K562 (cell line): ENCODE measurements at regions of chrX and their contacts with region 1.

Region 1: DNA sequence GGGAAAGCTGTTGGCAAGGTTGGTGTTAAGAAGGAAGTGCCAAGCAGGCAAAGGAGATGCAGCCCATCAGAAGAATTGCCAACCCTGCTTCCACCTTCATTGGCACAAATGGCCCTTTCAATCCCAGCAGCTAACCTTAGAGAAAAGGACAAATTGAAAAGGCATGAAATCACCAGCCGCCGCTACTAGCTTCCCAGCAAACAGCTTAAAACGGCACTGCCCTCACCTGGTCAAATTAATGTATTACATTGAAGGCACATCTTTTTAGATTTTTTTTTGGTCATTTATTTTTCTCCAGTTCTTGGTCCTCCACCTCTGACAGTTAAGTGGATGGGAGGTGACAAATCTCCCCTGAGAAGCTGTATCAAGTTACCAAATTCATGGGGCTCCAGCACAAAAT is 51.0 kb upstream of the NHSL2 start:
- DNase-seq: peak in 2 of 4 experiments; percentile 15 to 50
- ATAC-seq: peak; percentile 67
- H3K4me3 ChIP-seq: no peak overlapping the region
- H3K27ac ChIP-seq: no peak overlapping the region
- H3K4me1 ChIP-seq: no peaks in the 10 kb centered on the region; a peak in 2 of 5 replicates
- H3K27me3 ChIP-seq: peaks cover 0 to 12% of the 10 kb centered on the region in 2 experiments; a peak in 2 of 5 replicates
- CTCF ChIP-seq: peak; percentile 60 to 70 (median 61)
- EP300 ChIP-seq: no peak
- POLR2A ChIP-seq: no peak
- RAD21 ChIP-seq: peak; percentile 55 to 62

Region 2: GRCh38 chrX:71514367-71515038 is 345.1 kb before region 1 on chrX:
- CTCF ChIA-PET with region 1: no interaction called
- POLR2A ChIA-PET with region 1: no interaction called
- in situ Hi-C with region 1: no loop called
- intact Hi-C with region 1: no loop called
- DNase-seq: no peak
- ATAC-seq: peak; percentile 72; the same call in 2 of the 3 replicates
- H3K4me3 ChIP-seq: no peak overlapping the region
- H3K27ac ChIP-seq: no peak overlapping the region
- H3K4me1 ChIP-seq: no peaks in the 10 kb centered on the region
- H3K27me3 ChIP-seq: no peaks in the 10 kb centered on the region
- CTCF ChIP-seq: 0 out of 6 replicates have a peak, but pooled peaks of 1 of the 3 experiments have one; percentile 5
- EP300 ChIP-seq: no peak
- POLR2A ChIP-seq: no peak
- RAD21 ChIP-seq: no peak

Region 3: GRCh38 chrX:71671043-71671780 is 188.4 kb before region 1 on chrX:
- CTCF ChIA-PET with region 1: no interaction called
- POLR2A ChIA-PET with region 1: no interaction called
- in situ Hi-C with region 1: loop called (anchors 25 kb)
- intact Hi-C with region 1: loop called (anchors 1 kb)
- DNase-seq: no peak
- ATAC-seq: no peak
- H3K4me3 ChIP-seq: no peak overlapping the region
- H3K27ac ChIP-seq: no peak overlapping the region
- H3K4me1 ChIP-seq: peaks cover 0 to 14% of the 10 kb centered on the region in 2 experiments; a peak in 2 of 5 replicates
- H3K27me3 ChIP-seq: peaks cover 0 to 29% of the 10 kb centered on the region in 2 experiments; a peak in 3 of 5 replicates
- CTCF ChIP-seq: no peak
- EP300 ChIP-seq: no peak
- POLR2A ChIP-seq: no peak
- RAD21 ChIP-seq: no peak